Posterior vena cava (tissue), 2 donors: ENCODE measurements at regions of chr5 and their contacts with region 1.

Region 1: DNA sequence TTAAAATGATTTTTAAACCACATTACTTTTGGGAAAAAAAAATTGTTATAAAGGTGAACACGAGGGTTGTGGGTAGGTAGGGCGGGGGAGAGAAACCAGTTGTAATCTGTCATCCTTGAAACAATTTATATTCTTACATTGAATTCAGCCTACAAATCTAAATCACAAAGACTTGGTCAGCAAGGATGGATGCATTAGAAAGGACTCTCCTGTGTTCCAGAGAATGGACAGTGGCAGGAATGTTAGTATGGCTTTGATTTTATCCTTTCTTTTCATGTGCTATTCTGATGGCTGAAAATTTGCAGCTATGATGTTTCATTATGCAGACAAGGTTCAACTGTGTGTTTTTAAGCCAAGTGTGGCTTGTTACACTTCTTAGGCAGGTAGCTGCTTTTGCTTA is 234.7 kb downstream of the SLF1 start:
- DNase-seq: no peak

Region 2: GRCh38 chr5:94920570-94920969 is 67.5 kb after region 1 on chr5:
- intact Hi-C with region 1: loop called in 1 of 2 experiments (anchors 2 kb)
- DNase-seq: no peak